WTC11 (cell line): ENCODE measurements at regions of chr1 and their contacts with region 1.

Region 1: DNA sequence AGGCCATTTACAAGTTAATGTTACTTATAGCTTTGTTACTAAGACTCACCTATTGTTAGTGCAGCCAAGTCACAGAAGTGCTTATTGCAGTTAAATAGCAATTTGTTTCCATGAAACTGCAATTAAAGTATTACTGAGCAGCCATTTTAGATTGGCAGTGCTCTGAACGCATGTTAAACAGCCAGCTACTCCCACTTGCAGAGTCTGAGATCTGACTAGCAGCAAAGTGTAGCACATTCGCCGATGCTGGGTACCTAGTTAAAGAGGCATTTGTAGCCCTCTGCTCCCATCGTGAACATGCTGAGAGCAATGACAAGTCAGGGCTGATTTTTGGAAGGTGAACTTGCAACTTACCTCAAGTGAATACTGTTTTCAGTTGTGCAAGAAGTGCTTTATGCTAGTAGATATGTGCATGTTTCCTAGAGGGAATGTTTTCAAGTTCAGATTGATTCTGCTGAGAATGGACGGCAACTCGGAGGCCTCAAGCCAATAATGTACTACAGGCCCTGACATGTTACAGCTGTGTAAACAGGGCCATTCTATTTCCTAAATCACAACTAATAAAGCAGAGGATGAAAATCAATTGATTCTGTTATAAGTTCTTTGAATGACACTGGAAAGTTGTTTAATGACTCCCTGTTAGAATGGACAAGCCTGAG is 19.8 kb downstream of the LMO4 start:
- DNase-seq: no peak
- ATAC-seq: peak; percentile 48
- H3K4me3 Mint-ChIP-seq: no peak overlapping the region
- H3K27ac Mint-ChIP-seq: peak overlapping the region; percentile 52
- H3K4me1 Mint-ChIP-seq: peaks cover 68% of the 10 kb centered on the region
- H3K27me3 Mint-ChIP-seq: no peaks in the 10 kb centered on the region
- CTCF ChIP-seq: no peak

Region 2: GRCh38 chr1:87328272-87329050 is 20.0 kb before region 1 on chr1 and contains the start of gene LMO4:
- CTCF ChIA-PET with region 1: interaction called, 21 read pairs
- POLR2A ChIA-PET with region 1: interaction called, 20 read pairs
- DNase-seq: peak; percentile 95
- ATAC-seq: peak; percentile 73
- H3K4me3 Mint-ChIP-seq: peak within 1 kb of the TSS; percentile 85
- H3K27ac Mint-ChIP-seq: peak within 1 kb of the TSS; percentile 99
- H3K4me1 Mint-ChIP-seq: peaks cover 32% of the 10 kb centered on the region
- H3K27me3 Mint-ChIP-seq: no peaks in the 10 kb centered on the region
- CTCF ChIP-seq: no peak
- total RNA-seq, gene LMO4: 72.5 to 88.9 TPM (median 73.7 TPM) in 3 replicates

Region 3: GRCh38 chr1:87335175-87335884 is 13.1 kb before region 1 on chr1:
- CTCF ChIA-PET with region 1: interaction called, 21 read pairs
- POLR2A ChIA-PET with region 1: interaction called, 20 read pairs
- DNase-seq: peak; percentile 60
- ATAC-seq: peak; percentile 10
- H3K4me3 Mint-ChIP-seq: peak overlapping the region; percentile 85
- H3K27ac Mint-ChIP-seq: no peak overlapping the region
- H3K4me1 Mint-ChIP-seq: peaks cover 60% of the 10 kb centered on the region
- H3K27me3 Mint-ChIP-seq: no peaks in the 10 kb centered on the region
- CTCF ChIP-seq: no peak